Right ventricle myocardium inferior (tissue), 1 donor: ENCODE measurements at regions of chrX and their contacts with region 1.

Region 1: DNA sequence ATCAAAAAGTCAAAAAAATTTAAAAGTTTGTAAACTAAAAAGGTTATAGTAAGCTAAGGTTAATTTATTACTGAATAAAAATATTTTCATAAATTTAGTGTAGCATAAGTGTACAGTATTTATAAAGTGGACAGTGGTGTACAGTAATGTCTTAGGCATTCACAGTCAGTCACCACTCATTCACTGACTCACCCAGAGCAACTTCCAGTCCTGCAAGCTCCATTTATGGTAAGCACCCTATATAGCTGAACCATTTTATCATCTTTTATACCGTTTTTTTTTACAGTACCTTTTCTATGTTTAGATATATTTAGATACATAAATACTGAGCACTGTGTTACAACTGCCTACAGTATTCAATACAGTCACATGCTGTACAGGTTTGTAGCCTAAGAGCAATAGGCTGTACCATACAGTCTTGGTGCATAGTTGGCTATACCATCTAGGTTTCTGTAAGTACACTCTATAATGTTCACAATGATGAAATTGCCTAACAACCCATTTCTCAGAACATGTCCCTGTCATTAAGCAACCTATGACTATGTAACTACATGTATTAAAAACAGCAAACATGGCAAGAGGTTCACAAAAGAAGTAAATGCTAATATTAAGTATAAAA is 18.6 kb downstream of the ACSL4 start:
- DNase-seq: no peak
- ATAC-seq: no peak

Region 2: GRCh38 chrX:109398833-109399232 is 315.6 kb before region 1 on chrX:
- intact Hi-C with region 1: no loop called
- DNase-seq: no peak
- ATAC-seq: no peak

Region 3: GRCh38 chrX:109667986-109668385 is 46.5 kb before region 1 on chrX:
- intact Hi-C with region 1: no loop called
- DNase-seq: no peak
- ATAC-seq: no peak

Region 4: GRCh38 chrX:109886122-109886761 is 171.8 kb after region 1 on chrX:
- intact Hi-C with region 1: loop called (anchors 2 kb)
- DNase-seq: no peak
- ATAC-seq: no peak